ENCODE measurements at regions of chr16 and their contacts with region 1.

Region 1: GRCh38 chr16:89398924-89399323 is 91.4 kb downstream of the ANKRD11 start:
- DNase-seq: no peak
- ATAC-seq: no peak
- H3K4me3 ChIP-seq: no peak overlapping the region
- H3K4me3 Mint-ChIP-seq: peak overlapping the region in 1 of 3 donors; percentile 54
- H3K27ac ChIP-seq: no peak overlapping the region
- H3K27ac Mint-ChIP-seq: peak overlapping the region; percentile 59 to 72
- H3K4me1 ChIP-seq: peaks cover 9 to 81% of the 10 kb centered on the region in 2 experiments
- H3K4me1 Mint-ChIP-seq: peaks cover 79% of the 10 kb centered on the region in 3 donors
- H3K27me3 ChIP-seq: no peaks in the 10 kb centered on the region
- H3K27me3 Mint-ChIP-seq: no peaks in the 10 kb centered on the region

Region 2: DNA sequence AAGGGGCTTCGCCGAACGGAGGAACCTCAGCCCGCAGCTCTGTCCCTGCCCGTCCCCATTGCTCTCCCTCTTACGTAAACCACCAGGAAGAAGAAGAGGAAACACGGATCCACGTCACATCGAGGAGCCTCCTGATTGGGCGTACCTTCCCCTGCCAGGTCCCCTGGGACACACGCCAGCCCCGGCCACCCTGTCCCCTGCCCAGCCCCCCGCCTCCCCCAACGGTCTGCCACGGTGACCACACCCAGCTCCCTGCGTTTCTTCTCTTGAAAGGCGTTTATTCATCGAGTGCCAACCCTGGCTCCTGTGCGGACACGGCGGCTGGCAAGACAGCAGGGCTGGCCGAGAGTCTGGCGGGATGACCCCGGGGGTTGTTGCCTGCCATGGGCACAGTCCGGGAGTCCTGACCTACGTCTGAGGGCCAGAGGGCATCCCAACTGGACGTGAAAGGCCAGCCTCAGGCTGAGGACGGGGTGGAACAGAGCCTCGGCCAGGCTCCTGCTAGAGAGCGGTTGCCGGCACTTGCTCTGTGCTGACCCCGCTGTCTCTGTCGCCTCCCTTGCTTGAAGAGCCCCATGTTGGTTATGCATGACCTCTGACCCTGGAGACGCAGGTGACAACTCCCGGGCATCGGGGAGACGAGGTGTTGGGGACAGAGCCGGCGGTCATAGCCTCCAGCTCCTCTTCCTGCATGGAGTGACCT is 345.9 kb before region 1 on chr16:
- CTCF ChIA-PET with region 1: no interaction called
- POLR2A ChIA-PET with region 1: no interaction called
- DNase-seq: peak in 1 of 35 experiments; percentile 19
- ATAC-seq: peak in 2 of 4 experiments; percentile 26 to 86
- H3K4me3 ChIP-seq: peak overlapping the region in 1 of 2 donors; percentile 40
- H3K4me3 Mint-ChIP-seq: peak overlapping the region; percentile 77 to 86 (median 81)
- H3K27ac ChIP-seq: no peak overlapping the region
- H3K27ac Mint-ChIP-seq: peak overlapping the region; percentile 73 to 81
- H3K4me1 ChIP-seq: no peaks in the 10 kb centered on the region
- H3K4me1 Mint-ChIP-seq: peaks cover 0 to 11% (median 2%) of the 10 kb centered on the region in 3 donors
- H3K27me3 ChIP-seq: peaks cover 0 to 27% of the 10 kb centered on the region in 2 experiments
- H3K27me3 Mint-ChIP-seq: peaks cover 0 to 2% of the 10 kb centered on the region in 2 donors

Region 3: DNA sequence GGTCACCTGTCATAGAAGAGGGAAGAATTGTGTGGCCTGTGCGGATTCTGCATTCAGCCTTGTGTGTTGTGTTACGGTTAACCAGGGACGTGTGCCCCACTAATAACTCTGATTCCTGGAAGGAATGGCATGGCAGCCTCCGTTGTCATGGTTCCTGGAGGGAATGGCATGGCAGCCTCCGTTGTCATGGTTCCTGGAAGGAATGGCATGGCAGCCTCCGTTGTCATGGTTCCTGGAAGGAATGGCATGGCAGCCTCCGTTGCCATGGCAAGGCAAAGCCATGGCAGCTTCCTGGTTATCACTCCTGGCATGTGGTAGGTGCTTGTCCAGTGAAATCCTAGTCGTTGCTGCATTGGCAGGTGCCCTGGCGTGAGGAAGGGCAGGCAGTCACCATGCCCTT is 118.2 kb after region 1 on chr16:
- CTCF ChIA-PET with region 1: interaction called in 1 of 2 experiments, 10 read pairs
- POLR2A ChIA-PET with region 1: no interaction called
- DNase-seq: no peak
- ATAC-seq: no peak
- H3K4me3 ChIP-seq: no peak overlapping the region
- H3K4me3 Mint-ChIP-seq: no peak overlapping the region
- H3K27ac ChIP-seq: no peak overlapping the region
- H3K27ac Mint-ChIP-seq: no peak overlapping the region
- H3K4me1 ChIP-seq: no peaks in the 10 kb centered on the region
- H3K4me1 Mint-ChIP-seq: peaks cover 1 to 10% (median 7%) of the 10 kb centered on the region in 3 donors
- H3K27me3 ChIP-seq: no peaks in the 10 kb centered on the region
- H3K27me3 Mint-ChIP-seq: no peaks in the 10 kb centered on the region

Measured in T-cell (primary cell).